ENCODE measurements at regions of chr11 and their contacts with region 1.

Region 1: GRCh38 chr11:88414385-88414861 is 76.9 kb upstream of the CTSC start:
- DNase-seq: no peak
- H3K4me3 Mint-ChIP-seq: no peak overlapping the region
- H3K27ac Mint-ChIP-seq: peak overlapping the region; percentile 71
- H3K4me1 Mint-ChIP-seq: peaks cover 50% of the 10 kb centered on the region
- H3K27me3 Mint-ChIP-seq: no peaks in the 10 kb centered on the region

Region 2: DNA sequence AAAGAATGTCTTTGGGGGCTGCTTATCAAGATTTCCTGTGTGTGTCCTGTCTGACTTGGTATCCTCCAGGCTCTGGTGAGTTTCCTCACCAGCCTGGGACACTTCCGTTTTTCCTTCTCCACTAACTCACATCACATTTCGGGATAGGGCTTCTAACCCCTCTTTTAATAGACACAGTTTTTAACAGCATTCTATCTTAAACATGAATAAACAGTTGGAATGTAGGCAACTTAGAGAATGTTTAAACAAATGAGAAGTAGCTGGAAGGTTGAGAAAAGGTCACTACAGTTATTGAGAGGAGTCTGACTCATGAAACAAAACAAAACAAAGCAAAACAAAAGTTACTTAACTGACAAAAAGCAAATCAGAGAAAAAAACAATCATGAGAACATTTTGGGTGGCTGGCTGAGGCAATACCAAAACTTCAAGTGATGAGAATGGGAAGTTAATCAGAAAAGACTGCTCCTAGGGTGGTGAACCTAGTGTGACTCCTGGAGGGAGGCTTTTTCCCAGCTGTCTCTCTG is 12.2 kb before region 1 on chr11:
- intact Hi-C with region 1: loop called (anchors 2 kb)
- DNase-seq: no peak
- H3K4me3 Mint-ChIP-seq: no peak overlapping the region
- H3K27ac Mint-ChIP-seq: peak overlapping the region; percentile 1
- H3K4me1 Mint-ChIP-seq: peaks cover 31% of the 10 kb centered on the region
- H3K27me3 Mint-ChIP-seq: no peaks in the 10 kb centered on the region

Measured in activated T-helper 2 cell treated with anti-CD3 and anti-CD28 coated beads, Interferon-gamma antibody, Interleukin-2, Interleukin-4, amounts not matched to agents 10 μg/mL and 5 μg/mL and 100 μg/mL, durations not matched to agents 14 hours and 24 hours and 36 hours (primary cell).